ENCODE measurements at regions of chr14 and their contacts with region 1.

Region 1: GRCh38 chr14:103292426-103293374 is 41.3 kb upstream of the EIF5 start:
- DNase-seq: peak; percentile 93

Region 2: GRCh38 chr14:103078093-103078749 is 214.5 kb before region 1 on chr14:
- intact Hi-C with region 1: loop called (anchors 2 to 5 kb)
- DNase-seq: peak; percentile 93

Region 3: DNA sequence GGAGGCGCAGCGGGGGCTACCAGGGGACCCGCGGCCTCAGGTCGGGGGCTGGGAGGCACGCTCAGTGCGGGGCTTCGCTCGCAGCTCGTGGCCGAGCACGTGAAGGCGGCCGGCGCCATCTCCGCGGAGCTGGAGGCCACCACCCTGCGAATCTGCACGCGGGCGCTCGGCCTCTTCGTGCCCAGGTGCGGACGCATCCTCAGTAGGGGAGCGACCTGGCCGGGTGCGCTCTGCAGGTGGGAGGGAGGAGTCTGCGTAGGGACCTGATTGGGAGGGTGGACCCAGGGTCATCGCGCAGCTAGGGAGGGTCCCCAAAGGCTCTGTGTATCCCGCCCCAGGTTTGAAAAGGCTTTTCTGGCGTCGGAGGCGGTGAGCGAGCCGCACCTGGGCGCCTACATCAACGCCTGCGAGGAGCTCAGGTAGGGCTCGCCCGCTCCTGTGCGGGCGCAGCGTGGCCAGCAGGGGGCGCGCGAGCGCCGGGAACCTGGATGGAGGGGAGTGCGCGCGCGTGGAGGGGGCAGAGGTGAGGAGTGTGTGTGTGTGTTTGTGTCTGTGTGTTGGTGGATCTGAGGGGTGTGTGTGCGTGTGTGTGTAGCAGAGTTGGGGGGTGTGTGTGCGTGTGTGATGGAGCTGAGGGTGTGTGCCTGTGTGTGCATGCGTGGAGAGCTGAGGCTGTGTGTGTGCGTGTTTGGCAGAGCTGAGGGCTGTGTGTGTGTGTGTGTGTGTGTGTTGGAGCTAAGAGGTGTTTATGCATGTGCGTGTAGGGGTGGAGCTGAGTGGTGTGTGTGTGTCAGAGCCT is 187.8 kb before region 1 on chr14:
- intact Hi-C with region 1: loop called (anchors 5 kb)
- DNase-seq: no peak

Region 4: DNA sequence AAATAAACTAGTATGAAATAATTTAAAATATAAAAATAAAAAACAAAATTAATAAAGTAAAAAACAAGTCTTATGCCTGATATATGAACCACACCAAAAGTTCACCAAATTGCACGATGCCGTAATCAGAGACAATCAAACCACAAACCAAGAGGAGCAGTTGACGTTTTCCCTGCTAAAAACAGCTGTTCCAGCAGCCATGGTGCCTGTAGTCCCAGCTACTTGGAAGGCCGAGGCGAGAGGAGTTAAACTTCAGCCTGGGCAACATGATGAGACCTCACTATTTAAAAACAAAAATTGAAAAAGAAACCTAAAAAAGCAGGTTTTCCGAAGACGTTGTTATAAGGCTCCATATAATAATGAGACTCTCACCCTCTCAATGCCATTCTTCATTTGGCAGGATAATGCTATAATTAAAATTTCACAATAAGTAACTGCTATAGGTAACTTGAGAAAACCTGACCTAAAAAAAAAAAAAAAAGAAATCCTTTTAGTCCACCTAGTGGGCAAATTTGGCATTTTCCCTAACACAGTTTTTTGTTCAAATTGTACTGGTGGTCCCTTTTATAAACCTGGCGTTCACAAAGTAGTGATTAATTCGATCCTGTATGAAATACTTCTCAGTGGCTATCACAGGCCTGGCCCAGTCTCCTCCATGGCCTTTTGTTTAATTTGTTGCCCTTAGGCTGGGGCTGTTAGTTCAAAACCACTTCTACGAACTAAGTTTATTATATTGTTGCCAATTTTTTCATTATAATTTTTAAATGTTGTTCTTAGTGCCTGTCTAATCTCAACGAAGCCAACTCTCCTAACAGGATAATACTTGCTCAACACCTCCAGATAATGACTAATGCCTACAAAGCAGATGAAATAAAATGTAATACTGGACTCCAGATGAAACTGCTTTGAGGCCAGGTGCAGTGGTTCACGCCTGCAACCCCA is 107.4 kb before region 1 on chr14:
- intact Hi-C with region 1: loop called in 1 of 2 experiments (anchors 5 kb)
- DNase-seq: no peak